Naive thymus-derived CD4-positive, alpha-beta T cell (primary cell): ENCODE measurements at regions of chr7 and their contacts with region 1.

Region 1: GRCh38 chr7:135616136-135616535 is 46.2 kb upstream of the STMP1 start:
- DNase-seq: no peak
- ATAC-seq: no peak
- H3K4me3 ChIP-seq: no peak overlapping the region
- H3K4me3 Mint-ChIP-seq: no peak overlapping the region
- H3K27ac ChIP-seq: no peak overlapping the region
- H3K27ac Mint-ChIP-seq: no peak overlapping the region
- H3K4me1 ChIP-seq: no peaks in the 10 kb centered on the region
- H3K4me1 Mint-ChIP-seq: no peaks in the 10 kb centered on the region
- H3K27me3 ChIP-seq: no peaks in the 10 kb centered on the region
- H3K27me3 Mint-ChIP-seq: no peaks in the 10 kb centered on the region

Region 2: GRCh38 chr7:135575296-135575695 is 40.8 kb before region 1 on chr7:
- CTCF ChIA-PET with region 1: no interaction called
- POLR2A ChIA-PET with region 1: no interaction called
- intact Hi-C with region 1: loop called in 1 of 2 experiments (anchors 5 kb)
- DNase-seq: no peak
- ATAC-seq: no peak
- H3K4me3 ChIP-seq: no peak overlapping the region
- H3K4me3 Mint-ChIP-seq: peak overlapping the region in 1 of 10 donors; percentile 48
- H3K27ac ChIP-seq: no peak overlapping the region
- H3K27ac Mint-ChIP-seq: peak overlapping the region in 5 of 9 donors; percentile 7 to 87 (median 66)
- H3K4me1 ChIP-seq: no peaks in the 10 kb centered on the region
- H3K4me1 Mint-ChIP-seq: peaks cover 9 to 22% (median 13%) of the 10 kb centered on the region in 7 donors
- H3K27me3 ChIP-seq: no peaks in the 10 kb centered on the region
- H3K27me3 Mint-ChIP-seq: no peaks in the 10 kb centered on the region